AG04450 (cell line): ENCODE measurements at regions of chr1 and their contacts with region 1.

Region 1: DNA sequence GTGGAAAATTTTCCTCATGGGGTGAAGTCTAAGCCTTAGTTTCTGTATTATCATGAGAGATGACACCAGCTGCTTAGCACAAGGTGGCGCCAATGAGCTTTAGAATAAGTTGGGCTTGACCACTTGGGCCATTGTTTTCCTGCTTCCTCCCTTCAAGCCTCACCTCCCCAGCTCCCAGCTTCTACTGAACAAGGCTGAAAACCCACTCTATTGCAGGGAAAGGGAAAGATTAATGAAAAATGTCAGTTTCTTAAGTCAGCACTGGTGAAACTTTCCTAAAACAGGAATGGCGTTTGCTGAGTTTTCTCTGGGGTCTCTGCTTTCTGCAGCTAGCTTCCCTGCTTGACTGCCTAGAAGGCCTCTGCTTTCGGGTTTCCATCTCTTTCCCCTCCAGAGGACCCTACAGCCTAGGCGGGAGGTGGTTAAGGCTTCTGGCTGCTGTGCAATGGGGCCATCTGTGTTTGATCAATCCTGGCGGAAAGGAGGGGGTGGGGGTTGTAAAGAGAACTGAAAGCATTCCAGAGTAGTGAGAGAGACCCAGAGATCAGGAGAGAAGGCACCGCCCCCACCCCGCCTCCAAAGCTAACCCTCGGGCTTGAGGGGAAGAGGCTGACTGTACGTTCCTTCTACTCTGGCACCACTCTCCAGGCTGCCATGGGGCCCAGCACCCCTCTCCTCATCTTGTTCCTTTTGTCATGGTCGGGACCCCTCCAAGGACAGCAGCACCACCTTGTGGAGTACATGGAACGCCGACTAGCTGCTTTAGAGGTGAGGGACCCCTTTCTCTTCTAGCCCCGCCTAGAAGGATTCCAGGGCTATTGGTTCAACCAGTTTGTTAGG is at the start of gene OLFML3:
- DNase-seq: peak; percentile 91
- H3K4me3 ChIP-seq: peak within 1 kb of the TSS; percentile 70
- H3K27ac ChIP-seq: peak within 1 kb of the TSS; percentile 99
- H3K27me3 ChIP-seq: no peaks in the 10 kb centered on the region
- CTCF ChIP-seq: peak; percentile 70
- polyA plus RNA-seq, gene OLFML3: 90.3 and 105 TPM in 2 replicates

Region 2: GRCh38 chr1:113928941-113929749 is 49.9 kb before region 1 on chr1 and contains the start of gene HIPK1:
- CTCF ChIA-PET with region 1: interaction called, 12 read pairs
- POLR2A ChIA-PET with region 1: interaction called, 5 read pairs
- DNase-seq: peak; percentile 65
- H3K4me3 ChIP-seq: peak within 1 kb of the TSS; percentile 98
- H3K27ac ChIP-seq: peak within 1 kb of the TSS; percentile 82
- H3K27me3 ChIP-seq: no peaks in the 10 kb centered on the region
- CTCF ChIP-seq: no peak
- polyA plus RNA-seq, gene HIPK1: 28.4 and 31.3 TPM in 2 replicates

Region 3: GRCh38 chr1:113963281-113963906 is 15.7 kb before region 1 on chr1:
- CTCF ChIA-PET with region 1: interaction called, 20 read pairs
- POLR2A ChIA-PET with region 1: no interaction called
- DNase-seq: no peak
- H3K4me3 ChIP-seq: no peak overlapping the region
- H3K27ac ChIP-seq: no peak overlapping the region
- H3K27me3 ChIP-seq: no peaks in the 10 kb centered on the region
- CTCF ChIP-seq: peak; percentile 30

Region 4: GRCh38 chr1:114009393-114009792 is 30.3 kb after region 1 on chr1:
- CTCF ChIA-PET with region 1: interaction called, 17 read pairs
- POLR2A ChIA-PET with region 1: interaction called, 3 read pairs
- DNase-seq: no peak
- H3K4me3 ChIP-seq: no peak overlapping the region
- H3K27ac ChIP-seq: no peak overlapping the region
- H3K27me3 ChIP-seq: peaks cover 4% of the 10 kb centered on the region
- CTCF ChIP-seq: no peak

Region 5: GRCh38 chr1:114428083-114428749 is 449.1 kb after region 1 on chr1:
- CTCF ChIA-PET with region 1: interaction called, 16 read pairs
- POLR2A ChIA-PET with region 1: no interaction called
- DNase-seq: no peak
- H3K4me3 ChIP-seq: no peak overlapping the region
- H3K27ac ChIP-seq: no peak overlapping the region
- H3K27me3 ChIP-seq: no peaks in the 10 kb centered on the region
- CTCF ChIP-seq: peak; percentile 56